ENCODE measurements at regions of chr6 and their contacts with region 1.

Region 1: GRCh38 chr6:124795643-124796463 is 166.4 kb upstream of the RNF217 start:
- DNase-seq: peak; percentile 31
- ATAC-seq: peak; percentile 84 to 88

Region 2: GRCh38 chr6:123777563-123777962 is 1018.3 kb before region 1 on chr6:
- intact Hi-C with region 1: loop called (anchors 5 to 10 kb)
- DNase-seq: no peak
- ATAC-seq: no peak

Region 3: GRCh38 chr6:123788319-123788718 is 1007.5 kb before region 1 on chr6:
- intact Hi-C with region 1: loop called in 1 of 2 experiments (anchors 10 kb)
- DNase-seq: no peak
- ATAC-seq: no peak

Region 4: GRCh38 chr6:123802697-123803496 is 993.0 kb before region 1 on chr6:
- intact Hi-C with region 1: loop called in 1 of 2 experiments (anchors 1 kb)
- DNase-seq: peak; percentile 80
- ATAC-seq: peak; percentile 94 to 97